ENCODE measurements at regions of chr2 and their contacts with region 1.

Region 1: GRCh38 chr2:86584151-86584913 is 21.1 kb upstream of the CHMP3 start:
- DNase-seq: peak; percentile 71
- H3K4me3 Mint-ChIP-seq: peak overlapping the region; percentile 57
- H3K27ac Mint-ChIP-seq: peak overlapping the region; percentile 88
- H3K4me1 Mint-ChIP-seq: peaks cover 9% of the 10 kb centered on the region
- H3K27me3 Mint-ChIP-seq: peaks cover 3% of the 10 kb centered on the region

Region 2: GRCh38 chr2:86562922-86563649 is 21.2 kb before region 1 on chr2 and contains the start of gene CHMP3:
- intact Hi-C with region 1: loop called (anchors 1 kb)
- DNase-seq: peak; percentile 99
- H3K4me3 Mint-ChIP-seq: peak within 1 kb of the TSS; percentile 95
- H3K27ac Mint-ChIP-seq: peak within 1 kb of the TSS; percentile 99
- H3K4me1 Mint-ChIP-seq: peaks cover 24% of the 10 kb centered on the region
- H3K27me3 Mint-ChIP-seq: peaks cover 2% of the 10 kb centered on the region
- total RNA-seq, gene CHMP3: 28.3 and 29.0 TPM in 2 replicates

Region 3: GRCh38 chr2:86661333-86661732 is 77.0 kb after region 1 on chr2:
- intact Hi-C with region 1: no loop called
- DNase-seq: no peak
- H3K4me3 Mint-ChIP-seq: no peak overlapping the region
- H3K27ac Mint-ChIP-seq: no peak overlapping the region
- H3K4me1 Mint-ChIP-seq: no peaks in the 10 kb centered on the region
- H3K27me3 Mint-ChIP-seq: no peaks in the 10 kb centered on the region